Mammary epithelial cell (primary cell): ENCODE measurements at regions of chr14 and their contacts with region 1.

Region 1: DNA sequence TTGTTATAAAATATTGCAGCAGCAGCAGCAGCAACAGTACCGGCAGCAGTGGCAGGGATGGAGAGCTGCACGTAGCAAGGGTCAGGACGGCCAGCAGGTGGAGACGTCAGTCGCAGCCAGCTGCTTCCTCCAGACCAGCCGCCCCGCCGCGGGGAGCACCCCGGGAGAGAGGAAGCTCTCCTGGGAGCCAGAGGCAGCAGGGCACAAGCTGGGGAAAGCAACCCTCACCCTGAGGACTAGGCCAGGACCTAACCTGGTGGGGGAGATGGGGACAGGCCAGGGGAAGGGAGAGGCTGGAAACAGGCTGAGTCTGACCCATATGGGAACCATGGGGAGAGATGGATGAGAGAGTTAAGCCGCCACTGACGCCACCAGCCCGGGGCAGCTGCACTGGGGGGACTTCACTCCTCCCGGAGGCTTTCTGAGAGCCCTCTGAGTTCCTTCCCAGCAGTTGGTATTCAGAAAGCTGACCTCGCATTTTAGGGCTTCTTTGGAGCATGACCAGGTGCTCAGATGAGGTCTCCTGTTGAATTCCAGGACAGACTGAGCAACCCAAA is 56.3 kb downstream of the SPTB start:
- DNase-seq: peak; percentile 56
- H3K4me3 ChIP-seq: no peak overlapping the region
- H3K27ac ChIP-seq: no peak overlapping the region
- H3K4me1 ChIP-seq: peaks cover 9% of the 10 kb centered on the region
- H3K27me3 ChIP-seq: peaks cover 4% of the 10 kb centered on the region
- CTCF ChIP-seq: peak; percentile 53 to 86

Region 2: DNA sequence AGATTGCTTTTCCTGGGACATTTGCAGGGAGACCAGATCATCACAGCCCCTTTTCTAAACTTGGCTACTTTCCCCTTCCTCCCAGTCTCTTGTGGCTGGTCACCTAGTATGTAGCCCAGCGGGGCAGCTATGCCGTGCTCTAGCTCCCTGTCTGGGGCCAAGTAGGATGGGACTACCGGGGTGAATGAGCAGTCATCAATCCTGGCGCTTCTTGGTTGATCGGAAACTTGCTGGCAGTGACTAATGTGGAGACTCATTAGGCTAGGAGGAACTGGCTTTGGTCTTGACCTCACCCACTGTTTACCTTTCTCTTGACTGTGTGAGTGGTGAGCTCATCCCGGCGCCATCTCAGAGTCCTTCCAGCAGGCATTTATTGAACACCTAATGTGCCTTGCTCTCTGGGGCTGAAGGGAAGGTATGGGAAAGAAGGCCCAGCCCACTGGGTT is 103.2 kb before region 1 on chr14:
- CTCF ChIA-PET with region 1: no interaction called
- dilution Hi-C with region 1: no loop called
- in situ Hi-C with region 1: no loop called
- intact Hi-C with region 1: no loop called
- DNase-seq: peak; percentile 98
- H3K4me3 ChIP-seq: no peak overlapping the region
- H3K27ac ChIP-seq: peak overlapping the region; percentile 89
- H3K4me1 ChIP-seq: peaks cover 98% of the 10 kb centered on the region
- H3K27me3 ChIP-seq: no peaks in the 10 kb centered on the region
- CTCF ChIP-seq: no peak

Region 3: DNA sequence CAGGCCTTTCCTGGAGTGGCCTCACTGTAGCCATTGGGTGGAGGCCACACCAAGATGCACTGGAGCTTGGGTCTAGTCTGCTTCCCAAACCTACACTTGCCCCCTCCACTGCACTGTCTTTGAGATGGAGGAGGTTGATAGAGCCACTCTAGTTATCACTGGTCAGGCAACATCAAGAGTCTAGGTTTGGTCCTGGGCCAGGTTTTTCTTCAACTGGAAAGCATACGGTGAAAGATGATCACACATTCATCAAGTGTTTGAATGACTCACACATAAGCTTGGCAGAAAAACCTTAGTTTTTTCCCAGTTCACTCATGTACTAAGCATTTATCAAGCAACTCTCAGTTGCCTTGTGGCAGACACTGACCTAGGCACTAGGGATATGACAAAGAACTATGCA is 34.7 kb before region 1 on chr14:
- CTCF ChIA-PET with region 1: no interaction called
- dilution Hi-C with region 1: no loop called
- in situ Hi-C with region 1: no loop called
- intact Hi-C with region 1: no loop called
- DNase-seq: peak; percentile 90
- H3K4me3 ChIP-seq: no peak overlapping the region
- H3K27ac ChIP-seq: no peak overlapping the region
- H3K4me1 ChIP-seq: peaks cover 29% of the 10 kb centered on the region
- H3K27me3 ChIP-seq: no peaks in the 10 kb centered on the region
- CTCF ChIP-seq: no peak

Region 4: DNA sequence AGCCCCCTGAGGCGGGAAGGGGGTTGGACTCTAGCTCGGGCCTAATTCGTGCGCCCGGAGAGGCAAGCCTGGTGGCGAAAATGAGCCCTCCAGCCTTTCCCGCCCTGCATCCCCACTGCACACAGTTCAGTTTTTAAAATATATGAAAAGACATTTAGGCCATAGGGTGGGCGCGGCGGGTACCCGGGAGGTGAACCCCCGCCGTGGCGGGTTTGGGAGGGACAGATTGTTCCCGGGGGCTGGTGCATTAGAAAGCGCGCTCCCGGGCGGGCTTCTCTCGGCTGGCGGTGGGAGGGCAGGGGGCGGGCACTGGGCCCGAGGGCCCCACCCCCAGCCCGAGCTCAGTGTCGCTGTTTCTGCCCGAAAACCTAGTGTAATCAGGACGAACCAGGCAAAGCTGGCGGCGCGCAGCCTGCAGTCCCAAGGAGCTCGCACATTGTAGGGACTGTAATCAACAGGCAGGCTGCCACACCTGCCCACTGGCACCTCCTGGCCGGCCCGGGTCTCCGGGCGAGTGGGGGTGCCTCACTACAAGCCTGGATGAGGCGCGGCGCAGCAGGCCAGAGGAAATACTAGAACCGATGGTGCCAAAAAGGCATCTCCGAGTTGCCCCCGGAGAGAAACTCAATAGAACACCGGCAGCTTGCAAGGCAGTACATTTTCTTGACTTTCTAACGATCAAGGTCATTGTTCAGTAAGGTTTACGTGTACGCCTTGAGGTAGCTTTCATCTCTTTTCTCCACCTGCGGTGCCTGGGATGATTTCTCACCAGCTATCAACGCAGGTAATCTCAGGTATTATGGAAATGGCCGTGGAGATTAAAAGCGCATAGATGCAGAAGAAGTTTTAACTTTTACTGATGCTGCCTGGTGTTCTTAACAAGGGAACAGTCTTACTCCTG is 57.1 kb after region 1 on chr14:
- CTCF ChIA-PET with region 1: interaction called, 3 read pairs
- dilution Hi-C with region 1: no loop called
- in situ Hi-C with region 1: loop called in 1 of 2 experiments (anchors 10 kb)
- intact Hi-C with region 1: no loop called
- DNase-seq: peak; percentile 9
- H3K4me3 ChIP-seq: peak overlapping the region; percentile 28 to 45 (median 31)
- H3K27ac ChIP-seq: no peak overlapping the region
- H3K4me1 ChIP-seq: peaks cover 12% of the 10 kb centered on the region
- H3K27me3 ChIP-seq: peaks cover 27% of the 10 kb centered on the region
- CTCF ChIP-seq: no peak